ENCODE measurements at regions of chr9 and their contacts with region 1.

Region 1: DNA sequence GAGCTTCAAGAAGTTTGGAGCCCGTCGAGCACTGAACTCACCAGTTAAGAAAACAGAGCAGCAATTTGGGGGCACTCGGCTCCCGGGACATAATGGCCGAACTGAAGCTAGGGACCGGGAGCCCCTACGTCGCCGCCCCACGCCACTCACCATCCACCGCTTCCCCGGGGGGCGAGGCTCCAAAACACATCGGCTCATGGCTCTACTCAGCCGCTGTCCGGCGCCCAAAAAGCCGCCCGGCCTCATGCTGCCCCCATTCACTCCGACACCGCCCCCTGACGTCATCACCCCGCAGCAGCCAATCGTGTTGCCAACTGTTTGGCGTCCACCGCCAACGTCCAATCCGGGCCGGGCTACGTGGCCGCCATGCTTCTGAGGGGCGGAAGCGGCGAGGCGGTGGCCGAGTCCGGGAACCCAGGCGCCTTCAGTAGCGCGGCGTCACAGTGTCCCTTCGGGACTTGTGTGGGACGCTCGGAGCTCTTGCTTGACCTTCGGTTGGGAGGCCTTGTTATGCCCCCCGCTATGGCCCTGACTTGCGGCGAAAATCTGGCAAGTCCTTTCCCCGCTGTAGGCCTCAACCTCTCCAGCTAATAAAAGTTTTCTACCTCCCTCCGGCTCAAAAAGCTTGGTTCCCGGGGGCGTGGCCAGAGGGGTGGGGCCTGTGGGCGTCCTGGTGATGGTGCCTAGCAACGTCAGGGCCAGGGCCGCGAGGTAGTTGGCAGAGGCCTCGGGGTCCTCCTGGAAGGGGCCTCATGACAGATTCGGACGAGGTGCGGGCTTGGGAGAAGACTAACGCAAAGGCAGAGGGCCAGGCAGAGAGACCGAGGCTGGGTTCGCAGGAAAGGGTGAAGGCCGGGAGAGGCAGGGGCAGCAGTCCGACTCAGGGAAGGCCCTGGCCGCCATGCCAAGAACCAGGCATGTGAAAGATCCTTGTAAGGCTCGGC is at the starts of genes PTRH1 and TTC16:
- DNase-seq: peak; percentile 98
- ATAC-seq: peak; percentile 95
- H3K4me3 ChIP-seq: peak within 1 kb of the TSS; percentile 16 to 90 (median 66)
- H3K4me3 Mint-ChIP-seq: peak within 1 kb of the TSS; percentile 97
- H3K27ac ChIP-seq: peak within 1 kb of the TSS; percentile 35 to 81
- H3K27ac Mint-ChIP-seq: peak within 1 kb of the TSS; percentile 90
- H3K4me1 ChIP-seq: peaks cover 9 to 16% of the 10 kb centered on the region in 2 donors
- H3K4me1 Mint-ChIP-seq: peaks cover 26% of the 10 kb centered on the region
- H3K27me3 ChIP-seq: no peaks in the 10 kb centered on the region
- H3K27me3 Mint-ChIP-seq: no peaks in the 10 kb centered on the region
- CTCF ChIP-seq: no peak
- total RNA-seq, gene PTRH1: 6.2 and 7.6 TPM in 2 replicates
- total RNA-seq, gene TTC16: not detected in 2 replicates

Region 2: GRCh38 chr9:127224178-127224882 is 491.3 kb before region 1 on chr9:
- CTCF ChIA-PET with region 1: no interaction called
- POLR2A ChIA-PET with region 1: no interaction called
- intact Hi-C with region 1: loop called (anchors 2 kb)
- DNase-seq: peak; percentile 94
- ATAC-seq: peak; percentile 73
- H3K4me3 ChIP-seq: peak overlapping the region in 4 of 5 experiments; percentile 39 to 75 (median 52)
- H3K4me3 Mint-ChIP-seq: peak overlapping the region; percentile 93
- H3K27ac ChIP-seq: peak overlapping the region in 1 of 2 donors; percentile 39
- H3K27ac Mint-ChIP-seq: peak overlapping the region; percentile 95
- H3K4me1 ChIP-seq: peaks cover 21 to 33% of the 10 kb centered on the region in 2 donors
- H3K4me1 Mint-ChIP-seq: peaks cover 43% of the 10 kb centered on the region
- H3K27me3 ChIP-seq: peaks cover 0 to 9% (median 3%) of the 10 kb centered on the region in 4 experiments
- H3K27me3 Mint-ChIP-seq: peaks cover 4% of the 10 kb centered on the region
- CTCF ChIP-seq: no peak

Region 3: DNA sequence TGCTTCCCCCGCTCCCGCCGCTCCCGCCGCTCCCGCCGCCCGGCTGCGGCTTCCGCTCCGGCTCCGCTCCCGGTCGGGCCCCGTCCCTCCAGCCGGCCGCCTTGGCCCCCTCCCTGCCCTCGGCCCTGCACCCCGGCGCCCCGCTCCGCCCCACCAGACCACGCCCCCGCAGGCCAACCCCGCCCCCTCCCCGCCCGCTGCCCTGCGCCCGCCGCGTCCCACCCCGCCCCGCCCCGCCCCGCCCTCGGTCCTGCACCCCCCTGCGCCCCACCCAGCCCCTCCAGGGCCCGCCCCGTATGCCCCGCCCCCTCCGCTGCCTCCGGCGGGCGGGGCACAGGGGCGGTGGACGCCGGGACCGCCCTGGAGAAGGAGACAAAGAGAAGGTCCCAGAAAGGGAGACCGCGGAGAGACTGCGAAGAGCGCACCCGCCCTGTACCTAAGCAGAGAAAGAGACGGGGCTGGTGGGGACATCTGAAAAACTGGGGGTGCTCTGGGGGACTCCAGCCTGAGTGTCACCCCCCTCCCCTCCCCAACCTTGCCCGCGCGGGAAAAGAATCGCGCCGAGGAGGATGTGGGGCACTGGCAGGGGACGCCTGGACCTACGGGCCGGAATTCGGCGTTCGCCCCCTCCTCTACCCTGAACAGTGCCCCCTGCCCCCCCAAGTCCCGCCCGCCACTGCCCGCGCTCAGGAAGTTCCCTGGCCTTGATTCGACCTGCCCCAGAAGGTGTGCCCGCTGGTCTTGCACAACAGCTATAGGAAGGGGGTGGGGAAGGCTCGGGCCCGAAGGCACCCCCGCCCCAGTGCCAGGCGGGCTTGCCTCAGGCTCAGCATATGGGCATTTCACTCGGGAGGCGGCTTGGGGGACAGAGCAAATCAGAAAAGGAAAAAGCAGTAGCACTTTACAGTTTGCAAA is 146.4 kb before region 1 on chr9:
- CTCF ChIA-PET with region 1: no interaction called
- POLR2A ChIA-PET with region 1: no interaction called
- intact Hi-C with region 1: loop called (anchors 5 kb)
- DNase-seq: peak; percentile 80
- ATAC-seq: peak; percentile 92
- H3K4me3 ChIP-seq: peak overlapping the region in 4 of 5 experiments; percentile 53 to 72 (median 65)
- H3K4me3 Mint-ChIP-seq: peak overlapping the region; percentile 93
- H3K27ac ChIP-seq: no peak overlapping the region
- H3K27ac Mint-ChIP-seq: peak overlapping the region; percentile 81
- H3K4me1 ChIP-seq: peaks cover 18 to 24% of the 10 kb centered on the region in 2 donors
- H3K4me1 Mint-ChIP-seq: peaks cover 14% of the 10 kb centered on the region
- H3K27me3 ChIP-seq: peaks cover 0 to 7% (median 0%) of the 10 kb centered on the region in 4 experiments
- H3K27me3 Mint-ChIP-seq: no peaks in the 10 kb centered on the region
- CTCF ChIP-seq: no peak

Region 4: DNA sequence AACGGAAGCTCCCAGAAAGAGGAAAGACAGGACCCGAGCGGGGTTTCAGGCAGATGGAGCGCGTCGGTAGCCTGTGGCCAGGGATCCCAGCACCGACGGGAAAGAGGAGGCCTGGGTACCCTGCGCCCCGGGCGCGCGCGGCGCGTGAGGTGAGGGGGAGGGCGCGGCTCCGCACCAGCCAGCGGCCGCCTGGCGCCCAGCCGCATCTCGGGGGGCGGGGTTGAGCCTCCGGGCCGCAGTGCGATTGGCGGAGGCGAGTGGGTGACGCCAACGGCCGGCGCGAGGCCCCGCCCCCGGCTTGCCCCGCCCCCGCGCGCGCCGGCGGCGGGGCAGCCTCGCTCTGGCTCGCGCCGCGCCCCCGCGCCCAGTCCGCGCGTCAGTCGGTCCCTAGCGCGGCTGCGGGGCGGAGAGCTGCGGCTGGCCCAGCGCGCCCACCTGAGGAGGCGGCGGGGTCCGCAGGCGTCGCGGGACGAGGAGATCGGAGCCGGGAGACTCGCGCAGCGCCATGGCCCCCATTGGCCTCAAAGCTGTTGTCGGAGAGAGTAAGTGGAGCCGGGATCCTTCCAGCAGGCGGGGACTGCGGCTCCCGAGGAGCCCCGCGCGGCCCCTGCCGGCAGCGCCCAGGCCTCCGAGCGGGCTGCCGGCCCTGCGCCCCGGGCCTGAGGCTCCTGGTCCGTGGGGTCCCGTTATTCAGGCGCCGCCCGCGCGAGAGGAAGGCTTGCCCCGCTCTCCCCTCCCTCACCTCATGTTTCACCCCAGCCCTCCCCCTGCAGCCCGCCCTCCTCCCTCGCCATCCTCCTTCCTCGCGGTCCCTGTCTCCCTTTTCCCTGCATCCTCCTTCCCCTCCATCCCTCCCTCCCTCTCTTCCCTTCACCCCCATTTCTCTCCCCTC is 103.5 kb before region 1 on chr9 and contains the start of gene STXBP1:
- CTCF ChIA-PET with region 1: interaction called, 4 read pairs
- POLR2A ChIA-PET with region 1: no interaction called
- intact Hi-C with region 1: loop called (anchors 5 kb)
- DNase-seq: peak; percentile 91
- ATAC-seq: peak; percentile 94
- H3K4me3 ChIP-seq: peak within 1 kb of the TSS; percentile 55 to 84 (median 60)
- H3K4me3 Mint-ChIP-seq: peak within 1 kb of the TSS; percentile 98
- H3K27ac ChIP-seq: no peak within 1 kb of the TSS
- H3K27ac Mint-ChIP-seq: peak within 1 kb of the TSS; percentile 80
- H3K4me1 ChIP-seq: peaks cover 28 to 31% of the 10 kb centered on the region in 2 donors
- H3K4me1 Mint-ChIP-seq: peaks cover 25% of the 10 kb centered on the region
- H3K27me3 ChIP-seq: peaks cover 0 to 39% (median 33%) of the 10 kb centered on the region in 4 experiments
- H3K27me3 Mint-ChIP-seq: peaks cover 44% of the 10 kb centered on the region
- CTCF ChIP-seq: no peak
- total RNA-seq, gene STXBP1: 0.62 and 0.78 TPM in 2 replicates

Region 5: DNA sequence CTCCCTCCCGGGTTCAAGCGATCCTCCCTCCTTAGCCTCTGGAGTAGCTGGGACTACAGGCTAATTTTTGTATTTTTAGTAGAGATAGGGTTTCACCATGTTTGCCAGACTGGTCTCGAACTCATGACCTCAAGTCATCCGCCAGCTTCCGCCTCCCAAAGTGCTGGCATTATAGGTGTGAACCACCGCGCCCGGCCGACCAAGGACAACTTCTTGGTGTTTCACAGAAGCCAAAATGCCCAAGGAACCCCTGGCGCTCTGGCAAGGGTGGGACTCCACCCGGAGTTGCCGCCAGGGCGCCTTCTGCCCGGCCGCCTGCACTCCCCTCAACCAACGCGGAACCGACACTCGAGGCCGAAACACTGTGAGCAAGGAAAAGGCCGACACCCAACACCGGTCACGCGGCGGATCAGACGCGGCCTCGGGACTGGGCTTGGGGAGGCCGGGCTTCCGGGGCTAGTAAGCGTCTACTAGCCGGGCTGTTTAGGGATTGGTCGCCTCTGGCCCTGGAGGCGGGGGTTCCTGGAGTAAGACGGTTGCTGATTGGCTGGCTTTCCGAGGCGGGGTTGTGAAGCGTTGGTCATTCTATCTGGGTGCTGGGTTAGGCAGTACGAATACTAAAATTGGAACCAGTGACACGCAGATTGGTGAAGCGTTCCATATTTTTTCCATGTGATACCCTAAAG is 16.5 kb before region 1 on chr9:
- CTCF ChIA-PET with region 1: no interaction called
- POLR2A ChIA-PET with region 1: no interaction called
- intact Hi-C with region 1: loop called (anchors 1 kb)
- DNase-seq: peak; percentile 92
- ATAC-seq: peak; percentile 100
- H3K4me3 ChIP-seq: peak overlapping the region; percentile 34 to 59 (median 46)
- H3K4me3 Mint-ChIP-seq: peak overlapping the region; percentile 82
- H3K27ac ChIP-seq: peak overlapping the region in 1 of 2 donors; percentile 67
- H3K27ac Mint-ChIP-seq: peak overlapping the region; percentile 65
- H3K4me1 ChIP-seq: peaks cover 6 to 12% of the 10 kb centered on the region in 2 donors
- H3K4me1 Mint-ChIP-seq: peaks cover 14% of the 10 kb centered on the region
- H3K27me3 ChIP-seq: no peaks in the 10 kb centered on the region
- H3K27me3 Mint-ChIP-seq: no peaks in the 10 kb centered on the region
- CTCF ChIP-seq: peak; percentile 19

Region 6: DNA sequence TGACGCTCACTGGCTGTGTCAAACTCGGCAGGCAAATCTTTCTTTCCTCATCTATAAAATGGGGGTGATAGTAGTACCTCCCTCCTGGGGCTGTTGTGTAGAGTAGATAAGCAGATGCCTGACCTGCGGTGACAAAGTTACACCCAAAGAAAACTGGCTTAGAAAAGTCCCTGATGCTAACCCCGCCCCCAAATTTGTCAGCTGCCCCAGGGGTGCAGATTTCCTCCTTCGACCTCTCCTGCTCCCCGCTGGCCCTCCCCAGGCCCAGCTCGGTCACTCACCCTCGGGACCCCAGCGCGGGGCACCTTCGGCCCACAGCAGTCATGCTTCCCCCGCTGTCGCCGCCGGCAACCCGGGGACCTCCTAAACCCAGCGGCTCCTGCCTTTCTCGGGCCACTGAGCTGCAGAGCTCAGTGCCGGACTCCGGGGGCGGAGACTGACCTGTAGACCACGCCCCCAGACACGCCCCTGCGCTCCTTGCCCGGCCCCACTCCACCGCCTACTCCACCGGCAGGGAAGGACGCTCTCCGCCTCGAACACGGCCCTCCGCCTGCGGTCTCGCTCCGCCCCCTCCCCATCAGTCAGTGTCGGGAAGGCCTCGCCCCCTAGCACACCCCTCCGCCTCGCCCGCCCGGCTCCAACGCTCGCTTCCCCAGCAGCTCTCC is 55.4 kb after region 1 on chr9:
- CTCF ChIA-PET with region 1: no interaction called
- POLR2A ChIA-PET with region 1: no interaction called
- intact Hi-C with region 1: loop called (anchors 1 kb)
- DNase-seq: peak; percentile 95
- ATAC-seq: peak; percentile 86
- H3K4me3 ChIP-seq: peak overlapping the region; percentile 43 to 73 (median 64)
- H3K4me3 Mint-ChIP-seq: peak overlapping the region; percentile 94
- H3K27ac ChIP-seq: peak overlapping the region; percentile 77 to 94
- H3K27ac Mint-ChIP-seq: peak overlapping the region; percentile 95
- H3K4me1 ChIP-seq: peaks cover 55 to 90% of the 10 kb centered on the region in 2 donors
- H3K4me1 Mint-ChIP-seq: peaks cover 68% of the 10 kb centered on the region
- H3K27me3 ChIP-seq: no peaks in the 10 kb centered on the region
- H3K27me3 Mint-ChIP-seq: no peaks in the 10 kb centered on the region
- CTCF ChIP-seq: no peak

Region 7: GRCh38 chr9:127802576-127803443 is 87.1 kb after region 1 on chr9 and contains the start of gene FPGS:
- CTCF ChIA-PET with region 1: interaction called, 3 read pairs
- POLR2A ChIA-PET with region 1: no interaction called
- intact Hi-C with region 1: loop called (anchors 1 kb)
- DNase-seq: peak; percentile 93
- ATAC-seq: peak; percentile 84
- H3K4me3 ChIP-seq: peak within 1 kb of the TSS; percentile 65 to 96 (median 88)
- H3K4me3 Mint-ChIP-seq: peak within 1 kb of the TSS; percentile 91
- H3K27ac ChIP-seq: peak within 1 kb of the TSS; percentile 68 to 90
- H3K27ac Mint-ChIP-seq: peak within 1 kb of the TSS; percentile 92
- H3K4me1 ChIP-seq: peaks cover 20 to 31% of the 10 kb centered on the region in 2 donors
- H3K4me1 Mint-ChIP-seq: peaks cover 33% of the 10 kb centered on the region
- H3K27me3 ChIP-seq: no peaks in the 10 kb centered on the region
- H3K27me3 Mint-ChIP-seq: no peaks in the 10 kb centered on the region
- CTCF ChIP-seq: no peak
- total RNA-seq, gene FPGS: 136 and 137 TPM in 2 replicates

Measured in B cell (primary cell).